ENCODE measurements at regions of chr4 and their contacts with region 1.

Region 1: GRCh38 chr4:21380861-21381260 is 567.7 kb downstream of the KCNIP4 start:
- DNase-seq: no peak
- ATAC-seq: no peak
- H3K4me3 ChIP-seq: no peak overlapping the region
- H3K27ac ChIP-seq: no peak overlapping the region
- H3K4me1 ChIP-seq: no peaks in the 10 kb centered on the region
- H3K27me3 ChIP-seq: no peaks in the 10 kb centered on the region
- CTCF ChIP-seq: no peak
- EP300 ChIP-seq: no peak
- POLR2A ChIP-seq: no peak
- RAD21 ChIP-seq: no peak

Region 2: DNA sequence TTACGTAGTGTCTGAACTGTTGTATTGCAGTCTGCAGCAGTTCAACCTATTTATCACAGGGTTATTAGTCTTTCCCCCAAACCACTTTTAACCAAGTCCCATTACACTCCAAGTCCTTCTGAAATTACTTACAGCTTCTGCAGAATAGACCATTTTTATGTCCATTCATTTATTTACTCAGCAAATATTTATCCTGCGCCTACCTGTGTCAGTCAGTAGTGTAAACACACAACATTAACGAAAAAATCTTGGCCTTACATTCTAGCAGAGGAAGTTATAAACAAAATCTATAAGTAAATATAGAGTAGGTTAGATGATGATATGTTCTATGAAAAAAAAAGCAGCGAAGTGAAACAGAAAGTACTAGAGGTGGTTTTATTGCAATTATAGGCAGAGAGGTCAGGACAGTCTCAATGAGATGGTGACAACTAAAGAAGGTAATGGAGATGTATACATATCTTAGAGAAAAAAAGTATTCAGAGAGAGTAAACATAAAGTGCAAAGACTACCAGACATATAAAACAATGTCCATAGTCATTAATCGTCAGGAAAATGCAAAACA is 33.0 kb after region 1 on chr4:
- CTCF ChIA-PET with region 1: no interaction called
- POLR2A ChIA-PET with region 1: no interaction called
- in situ Hi-C with region 1: no loop called
- intact Hi-C with region 1: loop called (anchors 1 kb)
- DNase-seq: no peak
- ATAC-seq: no peak
- H3K4me3 ChIP-seq: no peak overlapping the region; a peak in 1 of 6 replicates
- H3K27ac ChIP-seq: no peak overlapping the region
- H3K4me1 ChIP-seq: peaks cover 15% of the 10 kb centered on the region
- H3K27me3 ChIP-seq: no peaks in the 10 kb centered on the region; a peak in 1 of 5 replicates
- CTCF ChIP-seq: no peak
- EP300 ChIP-seq: no peak
- POLR2A ChIP-seq: no peak
- RAD21 ChIP-seq: no peak

Region 3: GRCh38 chr4:21699446-21699845 is 318.6 kb after region 1 on chr4:
- CTCF ChIA-PET with region 1: no interaction called
- POLR2A ChIA-PET with region 1: no interaction called
- in situ Hi-C with region 1: no loop called
- intact Hi-C with region 1: no loop called
- DNase-seq: no peak
- ATAC-seq: no peak
- H3K4me3 ChIP-seq: no peak overlapping the region
- H3K27ac ChIP-seq: no peak overlapping the region
- H3K4me1 ChIP-seq: no peaks in the 10 kb centered on the region
- H3K27me3 ChIP-seq: no peaks in the 10 kb centered on the region
- CTCF ChIP-seq: no peak
- EP300 ChIP-seq: no peak
- POLR2A ChIP-seq: no peak
- RAD21 ChIP-seq: no peak